ENCODE measurements at regions of chr13 and their contacts with region 1.

Region 1: GRCh38 chr13:29362849-29363604 is 232.5 kb downstream of the SLC7A1 start:
- DNase-seq: peak; percentile 62
- H3K4me3 ChIP-seq: no peak overlapping the region
- H3K27ac ChIP-seq: no peak overlapping the region
- H3K4me1 ChIP-seq: no peaks in the 10 kb centered on the region
- H3K27me3 ChIP-seq: peaks cover 0 to 4% of the 10 kb centered on the region in 2 experiments
- CTCF ChIP-seq: peak; percentile 79 to 87
- POLR2A ChIP-seq: no peak

Region 2: GRCh38 chr13:28805193-28805819 is 557.7 kb before region 1 on chr13:
- CTCF ChIA-PET with region 1: no interaction called
- POLR2A ChIA-PET with region 1: no interaction called
- dilution Hi-C with region 1: no loop called
- intact Hi-C with region 1: loop called (anchors 1 kb)
- DNase-seq: no peak
- H3K4me3 ChIP-seq: no peak overlapping the region
- H3K27ac ChIP-seq: no peak overlapping the region
- H3K4me1 ChIP-seq: no peaks in the 10 kb centered on the region
- H3K27me3 ChIP-seq: peaks cover 0 to 5% of the 10 kb centered on the region in 2 experiments
- CTCF ChIP-seq: peak; percentile 44 to 47
- POLR2A ChIP-seq: no peak

Region 3: DNA sequence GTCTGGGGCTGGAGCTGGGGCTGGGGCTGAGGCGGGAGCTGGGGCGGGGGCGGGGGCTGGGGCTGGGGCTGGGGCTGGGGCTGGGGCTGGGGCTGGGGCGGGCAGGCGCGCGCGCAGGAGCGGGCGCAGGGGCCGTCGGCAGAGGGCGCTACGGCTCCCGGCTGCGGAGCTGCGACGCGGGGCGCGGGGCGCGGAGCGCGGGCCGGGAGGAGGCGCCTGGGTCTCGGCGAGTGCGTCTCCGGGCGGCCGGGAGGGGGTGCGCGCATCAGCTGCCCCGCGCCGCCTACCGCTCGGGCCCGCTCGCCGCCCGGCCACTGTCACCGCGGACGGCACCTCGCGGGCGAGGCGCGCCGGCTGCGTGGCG is 543.3 kb before region 1 on chr13:
- CTCF ChIA-PET with region 1: interaction called, 6 read pairs
- POLR2A ChIA-PET with region 1: no interaction called
- dilution Hi-C with region 1: no loop called
- intact Hi-C with region 1: loop called (anchors 5 kb)
- DNase-seq: peak; percentile 40
- H3K4me3 ChIP-seq: no peak overlapping the region
- H3K27ac ChIP-seq: no peak overlapping the region
- H3K4me1 ChIP-seq: peaks cover 10% of the 10 kb centered on the region
- H3K27me3 ChIP-seq: peaks cover 19 to 34% of the 10 kb centered on the region in 2 experiments
- CTCF ChIP-seq: peak in 1 of 2 donors; percentile 45
- POLR2A ChIP-seq: no peak

Region 4: GRCh38 chr13:28885181-28885580 is 477.8 kb before region 1 on chr13:
- CTCF ChIA-PET with region 1: no interaction called
- POLR2A ChIA-PET with region 1: no interaction called
- dilution Hi-C with region 1: no loop called
- intact Hi-C with region 1: no loop called
- DNase-seq: no peak
- H3K4me3 ChIP-seq: no peak overlapping the region
- H3K27ac ChIP-seq: no peak overlapping the region
- H3K4me1 ChIP-seq: no peaks in the 10 kb centered on the region
- H3K27me3 ChIP-seq: no peaks in the 10 kb centered on the region
- CTCF ChIP-seq: no peak
- POLR2A ChIP-seq: no peak